ENCODE measurements at regions of chr7 and their contacts with region 1.

Region 1: DNA sequence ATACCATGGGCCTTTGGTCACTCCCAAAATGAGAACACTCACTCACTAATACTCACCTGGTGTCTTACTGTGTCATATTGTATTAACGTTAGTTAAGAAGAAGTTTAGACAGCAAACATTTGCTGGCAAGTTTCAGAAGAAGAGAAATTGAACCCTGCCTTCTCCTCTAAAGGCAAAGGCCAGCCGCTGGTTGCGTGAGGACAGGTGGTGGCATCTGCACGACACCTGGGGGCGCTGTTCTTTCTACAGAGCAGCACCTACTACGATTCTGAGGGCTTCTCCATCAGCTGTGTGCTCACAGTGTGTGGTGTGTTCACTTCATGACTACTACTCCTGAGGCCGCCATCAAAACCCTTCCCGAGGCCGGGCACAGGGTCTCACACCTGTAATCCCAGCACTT is 17.9 kb upstream of the CLEC2L start:
- DNase-seq: peak; percentile 10
- ATAC-seq: peak; percentile 77
- H3K4me3 ChIP-seq: no peak overlapping the region
- H3K27ac ChIP-seq: no peak overlapping the region
- H3K4me1 ChIP-seq: peaks cover 4% of the 10 kb centered on the region; the same call in 1 of the 2 replicates
- H3K27me3 ChIP-seq: peaks cover 0 to 19% of the 10 kb centered on the region in 2 experiments; a peak in 3 of 5 replicates
- CTCF ChIP-seq: peak; percentile 64
- EP300 ChIP-seq: no peak
- POLR2A ChIP-seq: no peak
- RAD21 ChIP-seq: no peak

Region 2: DNA sequence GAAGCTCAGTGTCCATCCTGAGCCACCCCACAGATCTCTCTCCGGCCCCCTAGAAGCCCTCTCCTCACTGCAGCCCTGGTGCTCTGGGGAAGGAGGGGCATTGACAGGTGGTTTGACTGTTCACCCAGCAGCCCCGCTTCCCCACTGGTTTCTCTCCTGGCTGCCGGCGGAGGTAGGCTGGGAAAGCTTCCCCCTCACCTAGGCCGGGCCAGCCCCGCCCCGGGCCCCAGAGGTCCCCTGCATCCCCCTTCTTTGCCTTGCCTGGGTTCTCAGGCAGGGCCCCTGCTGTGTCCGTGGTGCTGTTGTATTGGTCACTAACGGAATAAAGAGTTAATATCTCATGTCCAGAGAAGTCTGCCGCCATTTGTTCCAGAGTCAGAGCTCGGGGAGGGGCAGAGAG is 39.1 kb after region 1 on chr7:
- CTCF ChIA-PET with region 1: no interaction called
- POLR2A ChIA-PET with region 1: no interaction called
- in situ Hi-C with region 1: no loop called
- intact Hi-C with region 1: no loop called
- DNase-seq: no peak
- ATAC-seq: no peak
- H3K4me3 ChIP-seq: no peak overlapping the region
- H3K27ac ChIP-seq: no peak overlapping the region
- H3K4me1 ChIP-seq: peaks cover 15% of the 10 kb centered on the region
- H3K27me3 ChIP-seq: peaks cover 10 to 64% of the 10 kb centered on the region in 2 experiments
- CTCF ChIP-seq: no peak
- EP300 ChIP-seq: no peak
- POLR2A ChIP-seq: no peak
- RAD21 ChIP-seq: no peak

Region 3: GRCh38 chr7:139557857-139558581 is 52.5 kb after region 1 on chr7:
- CTCF ChIA-PET with region 1: no interaction called
- POLR2A ChIA-PET with region 1: no interaction called
- in situ Hi-C with region 1: no loop called
- intact Hi-C with region 1: loop called (anchors 10 kb)
- DNase-seq: no peak
- ATAC-seq: peak; percentile 36
- H3K4me3 ChIP-seq: no peak overlapping the region
- H3K27ac ChIP-seq: no peak overlapping the region
- H3K4me1 ChIP-seq: no peaks in the 10 kb centered on the region
- H3K27me3 ChIP-seq: no peaks in the 10 kb centered on the region
- CTCF ChIP-seq: peak; percentile 44
- EP300 ChIP-seq: no peak
- POLR2A ChIP-seq: no peak
- RAD21 ChIP-seq: no peak

Measured in HepG2 (cell line).